Mammary epithelial cell (primary cell): ENCODE measurements at regions of chr4 and their contacts with region 1.

Region 1: GRCh38 chr4:98873059-98873458 is 55.9 kb downstream of the EIF4E start:
- DNase-seq: peak; percentile 41
- H3K4me3 ChIP-seq: no peak overlapping the region
- H3K27ac ChIP-seq: no peak overlapping the region
- H3K4me1 ChIP-seq: peaks cover 9% of the 10 kb centered on the region
- H3K27me3 ChIP-seq: no peaks in the 10 kb centered on the region
- CTCF ChIP-seq: no peak

Region 2: GRCh38 chr4:98833384-98833783 is 39.7 kb before region 1 on chr4:
- CTCF ChIA-PET with region 1: no interaction called
- dilution Hi-C with region 1: loop called (anchors 5 kb)
- in situ Hi-C with region 1: no loop called
- intact Hi-C with region 1: no loop called
- DNase-seq: no peak
- H3K4me3 ChIP-seq: no peak overlapping the region
- H3K27ac ChIP-seq: no peak overlapping the region
- H3K4me1 ChIP-seq: peaks cover 3% of the 10 kb centered on the region
- H3K27me3 ChIP-seq: no peaks in the 10 kb centered on the region
- CTCF ChIP-seq: no peak